ENCODE measurements at regions of chr12 and their contacts with region 1.

Region 1: GRCh38 chr12:113462117-113462774 is 9.4 kb downstream of the LHX5 start:
- DNase-seq: peak; percentile 77

Region 2: GRCh38 chr12:112309828-112310227 is 1152.4 kb before region 1 on chr12:
- in situ Hi-C with region 1: no loop called
- DNase-seq: no peak

Region 3: DNA sequence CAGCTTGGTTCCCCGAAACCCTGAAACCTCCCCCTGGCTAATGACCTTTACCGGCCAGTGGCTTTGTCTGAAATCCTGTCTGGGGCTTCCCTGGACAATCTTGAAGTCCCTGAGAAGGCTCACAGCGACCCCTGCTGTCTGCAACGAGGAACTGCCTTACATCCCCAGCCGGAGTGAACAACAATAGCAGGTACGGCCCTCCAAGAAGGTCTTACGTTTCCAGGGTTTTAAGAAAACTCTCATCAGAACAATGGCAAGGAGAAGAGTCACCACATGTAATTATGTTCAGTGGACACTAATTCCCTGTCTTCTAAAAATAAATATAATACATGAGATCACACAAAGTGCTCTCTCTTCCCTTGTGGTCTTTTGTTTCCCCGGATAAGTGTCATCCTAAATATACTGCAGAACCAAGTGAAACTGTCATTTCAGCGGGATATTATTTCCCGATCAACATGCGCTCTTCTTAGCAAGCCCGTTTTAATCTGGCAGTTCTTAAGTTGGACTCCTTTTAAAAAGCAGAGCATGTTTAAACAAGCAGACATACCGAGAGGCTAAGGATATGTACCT is 450.6 kb after region 1 on chr12:
- in situ Hi-C with region 1: loop called (anchors 25 kb)
- DNase-seq: peak; percentile 73

Measured in KBM-7 (cell line).